ENCODE measurements at regions of chr1 and their contacts with region 1.

Region 1: DNA sequence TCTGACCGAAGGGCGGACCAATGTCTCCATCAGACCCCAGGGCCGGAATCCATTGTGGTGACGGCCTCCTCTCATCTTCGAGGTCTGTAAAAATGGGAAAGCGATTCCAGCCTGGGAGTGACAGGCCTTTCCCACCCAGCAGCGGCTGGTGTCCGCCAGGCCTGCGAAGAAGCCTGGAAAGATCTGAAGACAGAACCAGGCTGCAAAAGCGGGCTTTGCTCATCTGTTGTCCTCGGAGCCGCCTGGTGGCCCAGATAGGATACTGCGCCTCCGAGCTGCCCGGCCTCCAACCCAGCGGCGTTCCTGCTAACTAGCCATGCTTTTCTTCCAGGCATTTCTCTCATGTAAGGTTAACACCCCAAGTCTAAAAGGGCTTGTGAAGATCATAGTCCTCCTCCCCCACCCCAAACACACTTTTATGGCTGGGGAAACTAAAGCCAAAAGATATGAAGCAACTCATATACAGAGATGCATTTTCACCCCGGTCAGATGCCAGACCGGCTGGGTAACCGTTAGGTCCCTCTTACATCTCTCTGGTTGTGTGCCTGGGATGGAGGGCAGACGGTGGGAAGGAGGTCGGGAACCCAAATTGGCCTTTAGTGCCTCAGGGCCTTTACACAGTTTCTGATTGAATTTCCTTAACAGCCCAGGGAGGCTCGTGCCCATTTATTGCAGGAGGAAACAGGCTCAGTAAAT is 1.9 kb upstream of the DHRS3 start:
- DNase-seq: no peak
- ATAC-seq: peak; percentile 85
- H3K4me3 ChIP-seq: no peak overlapping the region
- H3K27ac ChIP-seq: no peak overlapping the region
- H3K4me1 ChIP-seq: peaks cover 19% of the 10 kb centered on the region
- H3K27me3 ChIP-seq: peaks cover 4 to 13% of the 10 kb centered on the region in 2 experiments; a peak in 3 of 4 replicates
- CTCF ChIP-seq: peak; percentile 97 to 98 (median 97); a peak in 5 of 6 replicates
- EP300 ChIP-seq: no peak
- POLR2A ChIP-seq: no peak
- RAD21 ChIP-seq: peak; percentile 95

Region 2: DNA sequence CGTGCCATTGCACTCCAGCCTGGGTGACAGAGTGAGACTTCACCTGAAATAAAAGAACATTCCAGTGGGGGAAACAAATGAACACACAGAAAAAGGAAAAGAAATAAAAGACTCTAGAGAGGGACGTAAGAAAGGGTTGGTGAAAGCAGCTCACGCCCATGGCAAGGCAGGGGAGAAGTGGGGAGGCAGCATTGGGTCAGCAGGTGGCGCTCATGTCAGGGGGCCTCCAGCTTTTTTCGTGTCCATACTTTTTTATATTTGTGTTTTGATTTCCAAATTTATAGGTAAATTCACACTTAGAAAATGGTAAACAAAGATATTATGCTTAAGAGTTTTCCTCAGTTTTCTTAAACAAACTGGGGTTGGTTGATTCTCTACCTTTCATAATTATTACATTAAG is 344.6 kb before region 1 on chr1:
- CTCF ChIA-PET with region 1: interaction called, 49 read pairs
- POLR2A ChIA-PET with region 1: no interaction called
- RAD21 ChIA-PET with region 1: interaction called, 25 read pairs
- SMC1A ChIA-PET with region 1: interaction called, 7 read pairs
- in situ Hi-C with region 1: loop called (anchors 5 kb)
- intact Hi-C with region 1: loop called (anchors 1 kb)
- DNase-seq: no peak
- ATAC-seq: peak; percentile 53; the same call in 1 of the 3 replicates
- H3K4me3 ChIP-seq: no peak overlapping the region
- H3K27ac ChIP-seq: no peak overlapping the region
- H3K4me1 ChIP-seq: no peaks in the 10 kb centered on the region
- H3K27me3 ChIP-seq: no peaks in the 10 kb centered on the region
- CTCF ChIP-seq: peak; percentile 56 to 67 (median 60)
- EP300 ChIP-seq: no peak
- POLR2A ChIP-seq: no peak
- RAD21 ChIP-seq: peak; percentile 44

Region 3: GRCh38 chr1:12344596-12345349 is 275.2 kb before region 1 on chr1:
- CTCF ChIA-PET with region 1: interaction called, 5 read pairs
- POLR2A ChIA-PET with region 1: interaction called, 3 read pairs
- RAD21 ChIA-PET with region 1: interaction called, 4 read pairs
- SMC1A ChIA-PET with region 1: interaction called, 11 read pairs
- in situ Hi-C with region 1: no loop called
- intact Hi-C with region 1: no loop called
- DNase-seq: peak; percentile 31
- ATAC-seq: peak; percentile 80
- H3K4me3 ChIP-seq: peak overlapping the region; percentile 2; the same call in 1 of the 2 replicates
- H3K27ac ChIP-seq: peak overlapping the region; percentile 68
- H3K4me1 ChIP-seq: peaks cover 29% of the 10 kb centered on the region
- H3K27me3 ChIP-seq: no peaks in the 10 kb centered on the region
- CTCF ChIP-seq: no peak
- EP300 ChIP-seq: no peak
- POLR2A ChIP-seq: no peak
- RAD21 ChIP-seq: no peak

Region 4: GRCh38 chr1:12596007-12596821 is 23.7 kb before region 1 on chr1:
- CTCF ChIA-PET with region 1: interaction called, 47 read pairs
- POLR2A ChIA-PET with region 1: interaction called, 9 read pairs
- RAD21 ChIA-PET with region 1: interaction called, 50 read pairs
- SMC1A ChIA-PET with region 1: interaction called, 49 read pairs
- in situ Hi-C with region 1: no loop called
- intact Hi-C with region 1: no loop called
- DNase-seq: no peak
- ATAC-seq: peak; percentile 89
- H3K4me3 ChIP-seq: no peak overlapping the region
- H3K27ac ChIP-seq: no peak overlapping the region
- H3K4me1 ChIP-seq: no peaks in the 10 kb centered on the region
- H3K27me3 ChIP-seq: peaks cover 0 to 4% of the 10 kb centered on the region in 2 experiments; a peak in 3 of 4 replicates
- CTCF ChIP-seq: no peak
- EP300 ChIP-seq: no peak; a peak in 1 of 4 replicates
- POLR2A ChIP-seq: no peak
- RAD21 ChIP-seq: no peak

Region 5: DNA sequence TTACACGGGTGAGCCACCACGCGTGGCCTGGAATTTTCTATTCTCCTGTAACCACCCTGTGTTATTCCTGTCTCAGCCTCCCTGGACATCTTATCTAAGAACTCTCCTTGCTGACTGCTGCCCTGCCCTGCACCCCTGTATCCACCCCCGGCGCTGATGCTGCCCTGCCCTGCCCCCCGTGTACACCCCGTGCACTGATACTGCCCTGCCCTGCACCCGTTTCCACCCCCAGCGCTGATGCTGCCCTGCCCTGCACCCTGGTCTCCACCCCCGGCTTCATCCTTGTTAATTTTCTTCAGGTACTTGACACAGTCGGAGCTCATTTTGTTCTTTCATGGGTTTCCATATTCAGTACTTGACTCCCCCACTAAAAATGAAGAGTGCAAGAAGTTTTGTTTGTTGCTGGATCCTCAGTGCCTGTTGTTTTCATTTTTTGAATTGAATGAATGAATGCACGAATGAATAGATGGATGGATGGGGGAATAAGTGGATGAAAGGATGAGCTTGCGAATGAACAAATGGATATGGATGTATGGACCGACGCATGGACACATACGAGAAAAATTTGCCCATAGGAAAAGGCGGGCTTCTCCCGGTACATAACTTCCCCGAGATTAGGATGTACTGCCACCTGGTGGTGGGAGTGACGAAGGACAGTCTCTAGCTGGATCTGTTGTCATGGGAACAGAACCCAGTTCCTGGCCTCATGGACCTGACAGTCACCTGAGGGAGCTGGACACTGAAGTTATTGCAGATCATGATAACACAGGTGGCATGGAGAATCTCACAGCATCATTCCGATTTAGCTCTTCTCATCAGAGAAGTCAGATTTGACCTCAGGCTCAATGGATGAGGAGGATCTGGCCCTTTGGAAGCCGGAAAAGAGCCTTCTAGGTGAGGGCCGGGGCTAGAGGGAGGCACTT is 38.9 kb after region 1 on chr1:
- CTCF ChIA-PET with region 1: interaction called, 23 read pairs
- POLR2A ChIA-PET with region 1: no interaction called
- RAD21 ChIA-PET with region 1: interaction called, 7 read pairs
- SMC1A ChIA-PET with region 1: interaction called, 7 read pairs
- in situ Hi-C with region 1: no loop called
- intact Hi-C with region 1: no loop called
- DNase-seq: peak; percentile 30
- ATAC-seq: peak; percentile 89
- H3K4me3 ChIP-seq: no peak overlapping the region
- H3K27ac ChIP-seq: no peak overlapping the region
- H3K4me1 ChIP-seq: no peaks in the 10 kb centered on the region
- H3K27me3 ChIP-seq: no peaks in the 10 kb centered on the region
- CTCF ChIP-seq: peak; percentile 87 to 94 (median 89)
- EP300 ChIP-seq: no peak
- POLR2A ChIP-seq: no peak
- RAD21 ChIP-seq: peak; percentile 84

Measured in GM12878 (cell line).